Activated T-helper 1 cell treated with anti-CD3 and anti-CD28 coated beads, Interleukin-12 subunit alpha, Interleukin-12 subunit beta, Interleukin-2, Interleukin-4 antibody, amounts not matched to agents 30 ng/mL and 10 ng/mL and 1 ng/mL, durations not matched to agents 14 hours and 24 hours and 36 hours (primary cell): ENCODE measurements at regions of chr6 and their contacts with region 1.

Region 1: GRCh38 chr6:22328474-22328873 is 31.6 kb upstream of the PRL start:
- DNase-seq: no peak
- H3K4me3 Mint-ChIP-seq: no peak overlapping the region
- H3K27ac Mint-ChIP-seq: no peak overlapping the region
- H3K4me1 Mint-ChIP-seq: no peaks in the 10 kb centered on the region
- H3K27me3 Mint-ChIP-seq: no peaks in the 10 kb centered on the region

Region 2: GRCh38 chr6:22199771-22200170 is 128.7 kb before region 1 on chr6:
- intact Hi-C with region 1: no loop called
- DNase-seq: no peak
- H3K4me3 Mint-ChIP-seq: no peak overlapping the region
- H3K27ac Mint-ChIP-seq: no peak overlapping the region
- H3K4me1 Mint-ChIP-seq: no peaks in the 10 kb centered on the region
- H3K27me3 Mint-ChIP-seq: no peaks in the 10 kb centered on the region

Region 3: GRCh38 chr6:22302838-22303237 is 25.6 kb before region 1 on chr6:
- intact Hi-C with region 1: no loop called
- DNase-seq: no peak
- H3K4me3 Mint-ChIP-seq: no peak overlapping the region
- H3K27ac Mint-ChIP-seq: no peak overlapping the region
- H3K4me1 Mint-ChIP-seq: no peaks in the 10 kb centered on the region
- H3K27me3 Mint-ChIP-seq: no peaks in the 10 kb centered on the region

Region 4: GRCh38 chr6:22350109-22350508 is 21.6 kb after region 1 on chr6:
- intact Hi-C with region 1: loop called (anchors 1 kb)
- DNase-seq: no peak
- H3K4me3 Mint-ChIP-seq: no peak overlapping the region
- H3K27ac Mint-ChIP-seq: no peak overlapping the region
- H3K4me1 Mint-ChIP-seq: no peaks in the 10 kb centered on the region
- H3K27me3 Mint-ChIP-seq: no peaks in the 10 kb centered on the region